Tibial artery (tissue), 4 donors: ENCODE measurements at regions of chr15 and their contacts with region 1.

Region 1: DNA sequence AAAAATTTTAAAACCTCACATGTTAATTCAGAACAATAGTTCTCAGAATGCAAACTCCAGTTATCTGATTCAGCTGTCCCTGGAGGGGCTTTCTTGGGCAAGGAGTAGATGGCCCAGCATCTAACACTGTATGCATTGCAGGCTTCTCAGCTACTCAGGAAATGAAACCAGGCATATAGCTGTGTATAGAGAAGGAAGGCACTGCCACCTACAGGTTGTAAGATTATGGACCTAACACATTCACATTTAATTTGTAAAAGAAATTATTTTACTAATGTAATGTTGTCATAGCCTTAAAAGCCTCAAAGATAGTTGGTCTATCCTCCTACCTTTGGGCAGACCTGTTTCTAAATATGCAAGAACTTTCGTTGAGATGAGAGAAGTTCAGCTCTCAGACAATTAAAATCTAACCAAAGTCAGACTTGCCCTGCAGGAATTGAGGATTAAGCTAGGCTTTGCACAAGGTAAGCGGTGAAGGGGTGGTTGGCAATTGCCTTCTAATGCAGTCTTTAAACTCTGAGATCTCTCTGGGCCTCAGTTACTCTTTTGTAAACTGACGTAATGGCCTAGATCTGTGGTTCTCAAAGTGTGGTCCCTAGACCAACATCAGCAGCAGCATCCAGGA is 132.8 kb upstream of the SLC24A5 start:
- DNase-seq: no peak
- H3K4me3 ChIP-seq: no peak overlapping the region
- H3K27ac ChIP-seq: no peak overlapping the region
- H3K4me1 ChIP-seq: peaks cover 0 to 12% (median 0%) of the 10 kb centered on the region in 4 donors
- H3K27me3 ChIP-seq: no peaks in the 10 kb centered on the region
- CTCF ChIP-seq: peak; percentile 67 to 82

Region 2: DNA sequence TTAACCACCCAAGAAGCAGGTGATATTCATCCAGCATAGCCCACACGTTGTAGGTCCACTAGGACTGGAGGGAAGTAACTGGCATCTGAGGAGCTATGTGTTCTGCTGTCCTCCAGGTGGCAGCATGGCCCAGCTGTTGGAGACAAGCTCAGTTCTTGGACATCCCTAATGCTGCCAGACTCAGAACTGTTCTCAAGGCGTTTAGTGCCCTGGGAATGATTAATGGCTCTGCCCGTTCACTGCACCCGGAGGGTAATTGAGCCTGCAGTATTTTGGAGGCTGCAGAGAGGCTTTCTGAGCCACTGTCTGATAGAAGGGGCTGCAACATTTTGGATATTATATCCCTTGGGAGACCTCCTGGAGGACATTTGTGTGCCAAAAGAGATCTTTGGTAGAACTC is 792.0 kb before region 1 on chr15:
- intact Hi-C with region 1: loop called (anchors 5 kb)
- DNase-seq: peak; percentile 69 to 85
- H3K4me3 ChIP-seq: no peak overlapping the region
- H3K27ac ChIP-seq: no peak overlapping the region
- H3K4me1 ChIP-seq: no peaks in the 10 kb centered on the region
- H3K27me3 ChIP-seq: no peaks in the 10 kb centered on the region
- CTCF ChIP-seq: peak; percentile 81 to 88

Region 3: GRCh38 chr15:47473832-47474231 is 514.2 kb before region 1 on chr15:
- intact Hi-C with region 1: loop called (anchors 5 kb)
- DNase-seq: peak; percentile 69 to 83
- H3K4me3 ChIP-seq: no peak overlapping the region
- H3K27ac ChIP-seq: peak overlapping the region; percentile 36 to 50
- H3K4me1 ChIP-seq: peaks cover 0 to 39% (median 22%) of the 10 kb centered on the region in 4 donors
- H3K27me3 ChIP-seq: no peaks in the 10 kb centered on the region
- CTCF ChIP-seq: no peak

Region 4: GRCh38 chr15:47711654-47712053 is 276.4 kb before region 1 on chr15:
- intact Hi-C with region 1: loop called (anchors 2 kb)
- DNase-seq: no peak
- H3K4me3 ChIP-seq: no peak overlapping the region
- H3K27ac ChIP-seq: no peak overlapping the region
- H3K4me1 ChIP-seq: peaks cover 0 to 14% (median 10%) of the 10 kb centered on the region in 4 donors
- H3K27me3 ChIP-seq: no peaks in the 10 kb centered on the region
- CTCF ChIP-seq: peak; percentile 37 to 47

Region 5: GRCh38 chr15:48021336-48022086 is 33.5 kb after region 1 on chr15:
- intact Hi-C with region 1: no loop called
- DNase-seq: no peak
- H3K4me3 ChIP-seq: no peak overlapping the region
- H3K27ac ChIP-seq: no peak overlapping the region
- H3K4me1 ChIP-seq: no peaks in the 10 kb centered on the region
- H3K27me3 ChIP-seq: no peaks in the 10 kb centered on the region
- CTCF ChIP-seq: no peak